GM10248 (cell line): ENCODE measurements at regions of chr11 and their contacts with region 1.

Region 1: DNA sequence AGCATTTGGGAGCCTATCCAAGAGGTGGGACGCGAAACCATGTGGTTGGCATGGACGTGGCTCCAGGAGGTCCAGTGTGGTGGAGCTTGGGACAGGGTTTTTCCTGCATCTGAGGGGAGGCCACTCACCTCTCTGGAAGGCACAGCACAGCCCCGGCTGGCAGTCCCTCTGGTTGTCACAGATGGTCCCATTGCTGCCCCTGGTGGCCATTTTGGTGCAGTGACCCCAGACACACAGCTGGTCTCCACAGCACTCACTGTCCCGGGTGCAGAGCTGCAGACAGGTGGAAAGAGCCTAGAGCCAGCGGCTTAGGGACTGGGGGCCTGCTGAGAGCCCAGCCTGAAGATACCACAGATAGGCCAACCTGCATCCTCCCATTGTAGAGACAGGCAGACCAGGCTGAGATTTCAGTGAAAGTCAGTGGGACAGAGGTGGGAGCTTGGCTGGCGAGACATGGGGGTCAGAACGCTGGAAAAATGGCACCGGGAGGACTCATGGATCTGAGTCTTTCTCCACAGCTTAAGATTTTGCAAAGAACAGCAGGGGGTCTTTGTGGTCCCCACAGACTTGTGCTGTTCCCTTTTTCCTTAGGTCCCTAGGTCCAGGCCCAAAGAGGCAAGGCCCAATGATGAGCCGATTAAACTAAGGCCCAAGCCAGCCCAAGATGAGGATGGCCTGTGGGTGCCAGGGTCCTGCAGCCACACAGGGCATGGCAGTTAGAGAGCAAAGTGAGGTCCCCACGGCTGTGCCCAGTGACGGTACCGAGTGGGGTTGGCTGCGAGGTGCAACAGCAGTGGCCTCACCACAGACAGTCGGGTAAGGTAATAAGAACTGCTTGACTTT is 41.4 kb downstream of the DKK3 start:
- DNase-seq: peak; percentile 87
- CTCF ChIP-seq: peak; percentile 84

Region 2: GRCh38 chr11:11748706-11749365 is 218.2 kb before region 1 on chr11:
- CTCF ChIA-PET with region 1: no interaction called
- POLR2A ChIA-PET with region 1: no interaction called
- DNase-seq: no peak
- CTCF ChIP-seq: no peak

Region 3: DNA sequence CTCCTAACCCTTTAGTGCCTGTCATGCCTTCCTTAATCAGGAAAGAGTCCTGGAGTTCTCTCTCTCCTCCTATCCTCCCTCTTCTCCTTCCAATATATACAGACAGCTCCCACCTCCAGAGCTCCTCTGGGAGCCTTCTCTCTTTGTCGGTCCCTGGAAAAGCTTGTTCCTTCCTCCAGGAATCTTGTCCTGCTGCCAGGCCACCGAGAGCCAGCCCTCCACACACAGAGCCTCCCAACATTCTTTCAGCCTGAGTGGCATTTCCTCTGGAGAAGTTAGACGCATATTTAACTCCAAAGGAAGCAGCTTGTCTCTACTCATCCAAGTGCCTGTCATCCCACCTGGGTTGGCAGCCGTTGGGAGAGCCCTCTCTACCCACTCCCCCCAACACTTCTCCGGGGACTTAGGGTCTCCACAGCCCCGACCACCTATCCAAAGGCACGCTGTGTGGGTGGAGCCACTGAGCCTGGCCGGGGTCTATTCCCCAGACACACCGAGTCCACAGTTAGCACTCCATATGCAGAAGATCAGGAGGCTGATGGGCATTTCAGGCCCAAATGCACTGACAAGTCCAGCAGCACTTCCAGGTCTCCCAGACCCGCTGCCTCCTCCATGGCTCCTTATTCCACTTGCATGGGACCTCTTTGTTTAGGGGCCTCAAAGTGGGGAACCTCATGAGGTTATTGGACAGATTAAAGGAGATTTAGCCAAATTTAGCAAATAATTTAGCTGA is 10.3 kb after region 1 on chr11:
- CTCF ChIA-PET with region 1: interaction called, 20 read pairs
- POLR2A ChIA-PET with region 1: no interaction called
- DNase-seq: no peak
- CTCF ChIP-seq: no peak

Region 4: GRCh38 chr11:12007769-12008737 is 41.0 kb after region 1 on chr11 and contains the start of gene DKK3:
- CTCF ChIA-PET with region 1: interaction called, 20 read pairs
- POLR2A ChIA-PET with region 1: no interaction called
- DNase-seq: no peak
- CTCF ChIP-seq: no peak

Region 5: GRCh38 chr11:12441231-12441861 is 474.3 kb after region 1 on chr11:
- CTCF ChIA-PET with region 1: no interaction called
- POLR2A ChIA-PET with region 1: no interaction called
- DNase-seq: no peak
- CTCF ChIP-seq: no peak